ENCODE measurements at regions of chrX and their contacts with region 1.

Region 1: GRCh38 chrX:119871599-119872395 is at the starts of genes NDUFA1 and RNF113A:
- DNase-seq: peak; percentile 91
- H3K4me3 ChIP-seq: peak within 1 kb of the TSS; percentile 89
- H3K27ac ChIP-seq: peak within 1 kb of the TSS; percentile 93
- H3K4me1 ChIP-seq: no peaks in the 10 kb centered on the region
- H3K27me3 ChIP-seq: no peaks in the 10 kb centered on the region
- CTCF ChIP-seq: no peak
- total RNA-seq, gene NDUFA1: 111 and 123 TPM in 2 replicates
- total RNA-seq, gene RNF113A: 15.2 and 18.1 TPM in 2 replicates

Region 2: GRCh38 chrX:119791438-119792231 is 80.2 kb before region 1 on chrX and contains the start of gene RPL39:
- CTCF ChIA-PET with region 1: no interaction called
- POLR2A ChIA-PET with region 1: interaction called, 4 read pairs
- intact Hi-C with region 1: loop called (anchors 5 kb)
- DNase-seq: peak; percentile 93
- H3K4me3 ChIP-seq: peak within 1 kb of the TSS; percentile 68
- H3K27ac ChIP-seq: peak within 1 kb of the TSS; percentile 90
- H3K4me1 ChIP-seq: no peaks in the 10 kb centered on the region
- H3K27me3 ChIP-seq: no peaks in the 10 kb centered on the region
- CTCF ChIP-seq: no peak
- total RNA-seq, gene RPL39: 1,626 and 1,742 TPM in 2 replicates

Region 3: DNA sequence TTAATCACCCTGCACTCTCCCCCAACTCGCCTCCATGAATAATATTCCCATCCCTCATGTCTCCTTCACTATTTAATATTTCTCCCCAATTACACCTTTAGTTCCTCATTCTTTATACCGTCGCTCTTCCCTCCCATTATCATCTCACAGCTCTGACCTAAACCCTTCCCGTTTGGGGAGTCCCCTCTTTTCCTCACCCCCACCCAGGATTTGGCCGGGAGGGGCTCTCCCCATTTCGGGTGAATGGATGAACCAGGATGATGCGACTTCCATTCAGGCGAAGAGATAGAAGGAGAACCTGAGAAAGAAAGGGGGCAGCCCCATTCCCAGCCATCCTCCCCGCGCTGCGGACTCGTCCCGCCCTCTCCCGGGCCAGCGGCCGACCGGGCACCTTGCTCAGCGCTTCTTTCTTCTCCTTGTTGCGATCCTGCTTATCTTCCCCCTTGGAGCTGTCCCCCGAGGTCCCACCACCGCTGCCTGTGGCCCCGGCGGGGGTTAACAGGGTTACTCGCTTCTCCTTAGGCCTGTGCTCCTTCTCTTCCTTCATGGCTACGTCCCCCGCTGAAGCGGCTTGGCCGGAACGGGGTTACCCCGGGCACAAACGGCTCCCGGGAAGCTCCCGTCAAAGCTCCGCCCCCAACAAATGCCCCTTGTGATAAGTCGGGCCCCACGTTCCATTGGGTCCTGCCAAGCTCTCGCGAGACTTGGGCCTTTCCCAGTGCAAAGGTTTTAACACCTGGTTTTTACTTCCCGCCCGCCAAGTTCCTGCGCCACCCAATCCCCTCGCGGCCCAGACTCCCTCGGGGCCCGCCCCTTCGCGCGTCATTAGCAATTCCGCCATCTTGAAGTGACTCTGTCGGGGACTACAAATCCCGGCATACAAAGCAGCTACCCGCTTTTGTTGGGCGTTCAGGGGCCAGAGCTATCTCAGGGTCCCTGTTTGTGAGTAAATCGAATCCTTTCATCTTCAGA is 19.1 kb before region 1 on chrX and contains the start of gene UPF3B:
- CTCF ChIA-PET with region 1: no interaction called
- POLR2A ChIA-PET with region 1: no interaction called
- intact Hi-C with region 1: loop called (anchors 1 kb)
- DNase-seq: peak; percentile 98
- H3K4me3 ChIP-seq: peak within 1 kb of the TSS; percentile 70
- H3K27ac ChIP-seq: peak within 1 kb of the TSS; percentile 85
- H3K4me1 ChIP-seq: peaks cover 7% of the 10 kb centered on the region
- H3K27me3 ChIP-seq: no peaks in the 10 kb centered on the region
- CTCF ChIP-seq: no peak
- total RNA-seq, gene UPF3B: 22.6 and 23.4 TPM in 2 replicates